Caco-2 (cell line): ENCODE measurements at regions of chr7 and their contacts with region 1.

Region 1: DNA sequence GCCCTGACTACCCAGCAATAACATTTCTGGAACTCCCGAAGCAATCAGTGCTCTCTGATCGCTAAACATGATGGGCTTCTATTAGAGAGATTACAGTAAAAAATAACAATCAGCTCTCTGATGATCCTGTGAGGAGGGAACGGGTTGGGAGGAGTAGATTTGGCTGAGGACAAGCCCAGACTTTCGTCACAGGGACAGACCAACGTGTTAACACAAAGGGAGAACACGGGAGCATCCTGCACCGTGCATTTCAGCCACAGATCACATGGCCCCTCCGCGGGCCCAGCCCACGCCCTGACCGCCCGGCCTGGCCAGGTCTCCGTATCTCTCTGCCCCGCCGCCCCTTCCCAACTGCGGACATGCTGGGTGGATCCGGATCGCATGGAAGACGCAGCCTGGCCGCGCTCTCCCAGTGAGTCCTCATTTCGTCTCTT is 95.0 kb upstream of the AGBL3 start:
- DNase-seq: peak; percentile 94 to 96
- H3K4me3 ChIP-seq: peak overlapping the region; percentile 51
- H3K4me3 Mint-ChIP-seq: peak overlapping the region; percentile 71
- H3K27ac Mint-ChIP-seq: peak overlapping the region; percentile 46
- H3K4me1 ChIP-seq: peaks cover 54% of the 10 kb centered on the region
- H3K4me1 Mint-ChIP-seq: peaks cover 44% of the 10 kb centered on the region
- H3K27me3 ChIP-seq: no peaks in the 10 kb centered on the region
- H3K27me3 Mint-ChIP-seq: no peaks in the 10 kb centered on the region
- CTCF ChIP-seq: no peak

Region 2: GRCh38 chr7:134834689-134835462 is 56.4 kb before region 1 on chr7:
- CTCF ChIA-PET with region 1: no interaction called
- POLR2A ChIA-PET with region 1: no interaction called
- intact Hi-C with region 1: loop called (anchors 2 kb)
- DNase-seq: peak; percentile 62 to 73
- H3K4me3 ChIP-seq: no peak overlapping the region
- H3K4me3 Mint-ChIP-seq: peak overlapping the region; percentile 13
- H3K27ac Mint-ChIP-seq: peak overlapping the region; percentile 89
- H3K4me1 ChIP-seq: peaks cover 30% of the 10 kb centered on the region
- H3K4me1 Mint-ChIP-seq: peaks cover 30% of the 10 kb centered on the region
- H3K27me3 ChIP-seq: no peaks in the 10 kb centered on the region
- H3K27me3 Mint-ChIP-seq: no peaks in the 10 kb centered on the region
- CTCF ChIP-seq: no peak